ENCODE measurements at regions of chr1 and their contacts with region 1.

Region 1: GRCh38 chr1:150578965-150579798 is at the start of gene MCL1:
- H3K4me3 Mint-ChIP-seq: peak within 1 kb of the TSS; percentile 84
- H3K27ac Mint-ChIP-seq: peak within 1 kb of the TSS; percentile 95
- H3K4me1 Mint-ChIP-seq: peaks cover 36% of the 10 kb centered on the region
- H3K27me3 Mint-ChIP-seq: no peaks in the 10 kb centered on the region

Region 2: DNA sequence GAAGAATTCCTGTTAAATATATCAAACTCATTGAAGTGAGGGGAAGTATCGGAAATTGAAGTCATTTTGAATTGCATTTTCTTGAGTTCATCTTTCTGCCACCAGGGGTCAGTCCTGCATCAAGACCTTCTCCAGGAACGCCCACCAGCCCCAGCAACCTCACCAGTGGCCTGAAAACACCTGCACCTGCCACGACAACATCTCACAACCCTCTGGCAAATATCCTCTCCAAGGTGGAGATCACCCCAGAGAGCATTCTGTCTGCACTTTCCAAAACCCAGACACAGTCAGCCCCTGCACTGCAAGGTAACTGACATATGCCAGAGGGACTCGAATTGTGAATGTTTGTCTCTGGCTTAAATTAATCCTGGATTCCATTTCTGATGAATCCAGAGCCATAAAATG is 114.8 kb before region 1 on chr1:
- intact Hi-C with region 1: no loop called
- H3K4me3 Mint-ChIP-seq: no peak overlapping the region
- H3K27ac Mint-ChIP-seq: no peak overlapping the region
- H3K4me1 Mint-ChIP-seq: no peaks in the 10 kb centered on the region
- H3K27me3 Mint-ChIP-seq: no peaks in the 10 kb centered on the region

Region 3: GRCh38 chr1:150561974-150562445 is 17.2 kb before region 1 on chr1:
- intact Hi-C with region 1: loop called (anchors 2 kb)
- H3K4me3 Mint-ChIP-seq: peak overlapping the region; percentile 82
- H3K27ac Mint-ChIP-seq: peak overlapping the region; percentile 99
- H3K4me1 Mint-ChIP-seq: peaks cover 88% of the 10 kb centered on the region
- H3K27me3 Mint-ChIP-seq: no peaks in the 10 kb centered on the region

Region 4: GRCh38 chr1:150613061-150613920 is 34.1 kb after region 1 on chr1:
- intact Hi-C with region 1: loop called (anchors 1 kb)
- H3K4me3 Mint-ChIP-seq: peak overlapping the region; percentile 63
- H3K27ac Mint-ChIP-seq: peak overlapping the region; percentile 94
- H3K4me1 Mint-ChIP-seq: peaks cover 67% of the 10 kb centered on the region
- H3K27me3 Mint-ChIP-seq: no peaks in the 10 kb centered on the region

Region 5: DNA sequence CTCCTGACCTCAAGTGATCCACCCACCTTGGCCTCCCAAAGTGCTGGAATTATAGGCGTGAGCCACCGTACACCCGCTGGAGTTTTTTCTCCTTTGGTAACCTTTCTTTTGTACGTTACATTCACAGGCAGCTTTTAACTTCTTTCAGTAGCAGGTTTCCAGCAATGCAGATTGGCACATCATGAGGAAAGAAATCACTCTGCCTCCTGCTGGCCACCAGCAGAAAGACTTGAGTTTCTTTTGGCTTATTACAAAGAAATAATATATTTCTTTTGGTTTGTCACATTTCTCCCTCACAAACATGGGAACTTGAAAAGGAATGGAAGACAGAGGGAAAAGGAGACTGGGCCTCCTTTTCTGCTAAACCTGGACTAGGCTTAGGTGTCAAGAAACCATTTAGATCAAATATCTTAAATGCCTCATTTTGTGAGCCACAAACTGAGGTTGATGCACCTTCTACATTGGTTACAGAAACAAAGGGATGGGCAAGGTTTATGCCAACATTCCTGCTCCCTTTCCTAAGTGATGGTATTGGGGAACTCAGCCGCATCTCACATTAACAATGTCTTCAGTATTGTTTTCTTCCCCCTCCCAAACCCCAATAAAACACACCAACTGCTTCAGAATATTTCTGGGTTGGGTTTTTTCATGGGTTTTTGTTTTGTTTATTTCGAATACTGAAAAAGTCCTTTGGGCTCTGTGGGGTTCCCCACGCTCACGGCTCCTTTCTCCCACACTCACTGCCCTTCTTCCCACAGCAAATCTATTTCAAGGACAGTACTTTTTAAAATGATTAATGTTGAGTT is 42.5 kb after region 1 on chr1:
- intact Hi-C with region 1: loop called (anchors 2 kb)
- H3K4me3 Mint-ChIP-seq: peak overlapping the region; percentile 32
- H3K27ac Mint-ChIP-seq: peak overlapping the region; percentile 62
- H3K4me1 Mint-ChIP-seq: peaks cover 70% of the 10 kb centered on the region
- H3K27me3 Mint-ChIP-seq: no peaks in the 10 kb centered on the region

Region 6: GRCh38 chr1:150661156-150661555 is 82.0 kb after region 1 on chr1:
- intact Hi-C with region 1: no loop called
- H3K4me3 Mint-ChIP-seq: no peak overlapping the region
- H3K27ac Mint-ChIP-seq: no peak overlapping the region
- H3K4me1 Mint-ChIP-seq: peaks cover 12% of the 10 kb centered on the region
- H3K27me3 Mint-ChIP-seq: no peaks in the 10 kb centered on the region

Measured in dendritic cell treated with granulocyte-macrophage colony-stimulating factor and Interleukin-4, amounts not matched to agents 40 ng/mL and 50 ng/mL, for 4 days (primary cell).